Activated B cell treated with CpG ODN at 0.5 μM for 24 hours (primary cell): ENCODE measurements at regions of chr12 and their contacts with region 1.

Region 1: GRCh38 chr12:105053116-105053572 is 31.1 kb downstream of the ALDH1L2 start:
- DNase-seq: peak; percentile 36
- ATAC-seq: peak; percentile 91
- H3K4me3 Mint-ChIP-seq: no peak overlapping the region
- H3K27ac Mint-ChIP-seq: no peak overlapping the region
- H3K4me1 Mint-ChIP-seq: peaks cover 17% of the 10 kb centered on the region
- H3K27me3 Mint-ChIP-seq: no peaks in the 10 kb centered on the region
- CTCF ChIP-seq: peak; percentile 96

Region 2: DNA sequence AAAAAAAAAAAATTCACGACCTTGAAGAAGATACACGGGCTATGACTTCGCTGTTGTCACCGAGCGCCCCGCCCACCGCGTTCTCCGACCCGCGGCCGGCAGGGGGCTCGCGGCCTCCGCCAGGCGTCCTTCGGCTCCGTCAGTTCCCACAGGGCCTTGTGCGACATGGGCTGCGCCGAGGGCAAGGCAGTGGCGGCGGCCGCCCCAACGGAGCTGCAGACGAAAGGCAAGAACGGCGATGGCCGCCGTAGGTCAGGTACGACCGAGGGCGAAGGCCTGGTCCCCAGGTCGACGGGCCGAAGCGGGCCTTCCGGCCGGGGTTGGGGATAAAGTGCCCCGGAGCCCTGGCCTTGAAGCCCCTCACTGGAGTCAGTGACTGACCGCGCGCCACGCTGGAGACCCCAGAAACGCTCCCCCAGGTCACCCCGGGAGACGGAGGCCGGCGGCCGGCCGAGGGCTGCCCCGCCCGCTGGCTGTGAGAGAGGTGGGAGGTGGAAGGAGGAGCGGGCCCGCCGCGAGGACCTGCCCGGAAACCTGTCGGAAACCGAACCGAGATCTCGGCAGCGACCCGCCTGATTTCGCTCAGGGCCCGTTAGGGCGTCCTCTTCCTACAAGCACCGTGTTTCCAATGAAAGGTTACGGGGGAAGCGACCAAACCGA is 837.4 kb before region 1 on chr12 and contains the start of gene TXNRD1:
- CTCF ChIA-PET with region 1: interaction called, 5 read pairs
- POLR2A ChIA-PET with region 1: no interaction called
- intact Hi-C with region 1: loop called (anchors 1 kb)
- DNase-seq: peak; percentile 82
- ATAC-seq: peak; percentile 93
- H3K4me3 Mint-ChIP-seq: peak within 1 kb of the TSS; percentile 79
- H3K27ac Mint-ChIP-seq: peak within 1 kb of the TSS; percentile 65
- H3K4me1 Mint-ChIP-seq: peaks cover 21% of the 10 kb centered on the region
- H3K27me3 Mint-ChIP-seq: peaks cover 6% of the 10 kb centered on the region
- CTCF ChIP-seq: no peak
- total RNA-seq, gene TXNRD1: 72.0 and 77.3 TPM in 2 replicates

Region 3: DNA sequence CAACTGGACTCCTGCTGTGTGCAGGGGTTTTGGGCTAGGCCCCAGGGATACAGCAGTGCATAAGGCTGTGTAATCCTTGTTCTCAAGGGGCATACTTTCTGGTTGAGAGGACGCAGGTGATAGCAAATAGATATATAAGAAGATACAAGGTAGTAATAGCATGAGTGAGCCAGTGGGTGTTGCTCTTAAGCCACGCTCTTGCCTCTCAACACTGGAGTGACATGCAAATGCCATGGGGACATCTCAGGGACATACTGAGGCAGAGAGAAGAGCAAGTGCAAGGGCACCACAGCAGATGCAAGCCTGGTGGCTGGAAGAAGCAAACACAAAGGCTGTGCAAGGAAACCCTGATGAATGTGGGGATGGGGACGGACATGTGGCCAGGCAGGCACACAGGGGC is 373.1 kb before region 1 on chr12:
- CTCF ChIA-PET with region 1: interaction called, 3 read pairs
- POLR2A ChIA-PET with region 1: no interaction called
- intact Hi-C with region 1: loop called (anchors 1 kb)
- DNase-seq: no peak
- ATAC-seq: peak; percentile 64
- H3K4me3 Mint-ChIP-seq: no peak overlapping the region
- H3K27ac Mint-ChIP-seq: no peak overlapping the region
- H3K4me1 Mint-ChIP-seq: peaks cover 88% of the 10 kb centered on the region
- H3K27me3 Mint-ChIP-seq: no peaks in the 10 kb centered on the region
- CTCF ChIP-seq: no peak

Region 4: DNA sequence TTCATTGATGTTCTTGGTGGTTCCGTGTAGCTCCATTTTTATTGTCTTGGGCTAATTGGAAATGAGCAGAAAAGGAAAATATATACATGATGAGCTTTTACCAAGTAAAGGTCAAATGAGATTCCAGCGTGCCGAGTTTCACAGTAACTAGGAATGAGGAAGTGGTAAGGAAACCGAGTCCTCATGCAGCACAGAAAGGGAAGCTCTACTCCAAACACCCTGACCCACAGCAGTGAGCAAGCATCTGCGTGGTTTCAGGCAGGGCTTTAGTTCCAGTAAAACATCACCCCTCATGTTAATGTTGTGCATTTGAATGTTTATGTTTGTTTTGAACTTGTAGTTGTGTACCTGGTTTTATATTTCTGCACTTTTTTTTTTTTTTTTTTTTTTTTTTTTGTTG is 303.1 kb before region 1 on chr12:
- CTCF ChIA-PET with region 1: no interaction called
- POLR2A ChIA-PET with region 1: no interaction called
- intact Hi-C with region 1: loop called (anchors 5 kb)
- DNase-seq: no peak
- ATAC-seq: peak; percentile 51
- H3K4me3 Mint-ChIP-seq: no peak overlapping the region
- H3K27ac Mint-ChIP-seq: peak overlapping the region; percentile 50
- H3K4me1 Mint-ChIP-seq: peaks cover 66% of the 10 kb centered on the region
- H3K27me3 Mint-ChIP-seq: no peaks in the 10 kb centered on the region
- CTCF ChIP-seq: no peak

Region 5: DNA sequence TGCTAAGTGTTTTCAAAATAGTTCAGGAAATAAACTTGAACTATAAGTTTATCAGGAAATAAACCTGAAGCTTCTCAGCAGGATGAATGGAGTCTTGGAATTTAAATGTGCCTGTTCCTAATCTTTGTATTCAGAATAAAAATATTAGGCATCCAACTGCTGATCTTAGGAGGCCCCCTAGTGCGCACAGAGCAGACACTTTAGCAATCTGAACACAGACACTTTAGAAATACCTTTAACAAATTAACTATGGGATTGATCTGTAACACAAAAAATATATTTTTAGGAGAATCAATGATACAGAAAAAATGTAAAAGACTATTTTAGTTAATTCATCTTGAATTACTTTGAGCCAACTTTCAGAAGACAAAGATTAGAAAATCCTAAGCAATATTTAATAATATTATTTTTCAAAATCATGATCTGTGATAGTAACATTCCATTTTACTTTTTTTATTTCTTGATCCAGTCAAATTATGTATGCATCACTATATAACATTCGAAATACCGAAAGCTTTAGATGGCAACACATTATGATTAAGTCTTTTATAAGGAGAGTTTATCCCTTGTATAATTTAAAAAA is 175.9 kb before region 1 on chr12:
- CTCF ChIA-PET with region 1: interaction called, 9 read pairs
- POLR2A ChIA-PET with region 1: no interaction called
- intact Hi-C with region 1: loop called (anchors 1 kb)
- DNase-seq: no peak
- ATAC-seq: no peak
- H3K4me3 Mint-ChIP-seq: no peak overlapping the region
- H3K27ac Mint-ChIP-seq: no peak overlapping the region
- H3K4me1 Mint-ChIP-seq: no peaks in the 10 kb centered on the region
- H3K27me3 Mint-ChIP-seq: peaks cover 3% of the 10 kb centered on the region
- CTCF ChIP-seq: no peak

Region 6: DNA sequence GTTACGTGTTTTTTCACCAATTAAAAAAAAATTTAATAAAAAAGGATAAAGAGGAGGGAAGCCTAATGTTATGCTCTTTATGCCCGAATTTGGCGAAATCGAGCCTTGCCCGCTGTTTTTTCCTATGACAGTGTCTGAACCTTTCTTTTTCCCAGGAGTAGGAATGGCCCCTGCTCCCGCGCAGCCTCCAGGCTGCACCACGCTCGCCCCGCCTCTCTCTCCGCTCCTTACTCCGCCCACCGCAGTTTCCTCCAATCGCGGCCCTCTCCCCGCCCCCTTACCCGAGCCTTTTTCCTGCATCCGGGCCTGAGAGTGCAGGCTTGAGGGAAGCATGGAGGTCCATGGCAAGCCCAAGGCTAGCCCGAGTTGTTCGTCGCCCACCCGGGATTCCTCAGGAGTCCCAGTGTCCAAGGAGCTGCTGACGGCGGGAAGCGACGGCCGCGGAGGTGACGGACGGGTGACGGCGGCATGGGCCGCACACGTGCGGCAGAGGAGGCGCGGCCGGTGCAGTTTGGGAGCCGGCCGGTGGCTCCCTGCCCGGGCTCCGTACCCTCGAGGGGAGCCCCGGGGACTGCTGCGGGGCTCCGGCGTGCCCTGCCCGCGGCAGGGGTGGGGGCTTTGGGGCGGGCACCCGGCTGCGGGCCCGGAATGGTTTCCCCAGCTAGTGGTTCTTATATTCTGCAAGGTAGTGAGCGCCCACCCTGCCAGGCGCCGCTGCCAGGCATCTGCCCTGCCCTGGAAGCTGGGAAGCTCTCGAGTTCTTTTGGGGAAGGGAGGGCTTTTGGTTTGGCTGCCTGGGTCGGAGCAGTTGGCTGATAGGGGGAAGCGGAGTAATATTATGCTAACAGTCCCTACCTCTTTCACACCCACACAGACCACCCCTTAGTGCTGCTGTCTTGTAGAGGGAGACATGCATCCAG is 66.9 kb before region 1 on chr12 and contains the start of gene NOPCHAP1:
- CTCF ChIA-PET with region 1: no interaction called
- POLR2A ChIA-PET with region 1: no interaction called
- intact Hi-C with region 1: loop called (anchors 2 kb)
- DNase-seq: peak; percentile 83
- ATAC-seq: peak; percentile 98
- H3K4me3 Mint-ChIP-seq: peak within 1 kb of the TSS; percentile 91
- H3K27ac Mint-ChIP-seq: peak within 1 kb of the TSS; percentile 70
- H3K4me1 Mint-ChIP-seq: peaks cover 24% of the 10 kb centered on the region
- H3K27me3 Mint-ChIP-seq: no peaks in the 10 kb centered on the region
- CTCF ChIP-seq: no peak
- total RNA-seq, gene NOPCHAP1: 26.4 and 30.0 TPM in 2 replicates